Endothelial cell of umbilical vein (primary cell): ENCODE measurements at regions of chr7 and their contacts with region 1.

Region 1: DNA sequence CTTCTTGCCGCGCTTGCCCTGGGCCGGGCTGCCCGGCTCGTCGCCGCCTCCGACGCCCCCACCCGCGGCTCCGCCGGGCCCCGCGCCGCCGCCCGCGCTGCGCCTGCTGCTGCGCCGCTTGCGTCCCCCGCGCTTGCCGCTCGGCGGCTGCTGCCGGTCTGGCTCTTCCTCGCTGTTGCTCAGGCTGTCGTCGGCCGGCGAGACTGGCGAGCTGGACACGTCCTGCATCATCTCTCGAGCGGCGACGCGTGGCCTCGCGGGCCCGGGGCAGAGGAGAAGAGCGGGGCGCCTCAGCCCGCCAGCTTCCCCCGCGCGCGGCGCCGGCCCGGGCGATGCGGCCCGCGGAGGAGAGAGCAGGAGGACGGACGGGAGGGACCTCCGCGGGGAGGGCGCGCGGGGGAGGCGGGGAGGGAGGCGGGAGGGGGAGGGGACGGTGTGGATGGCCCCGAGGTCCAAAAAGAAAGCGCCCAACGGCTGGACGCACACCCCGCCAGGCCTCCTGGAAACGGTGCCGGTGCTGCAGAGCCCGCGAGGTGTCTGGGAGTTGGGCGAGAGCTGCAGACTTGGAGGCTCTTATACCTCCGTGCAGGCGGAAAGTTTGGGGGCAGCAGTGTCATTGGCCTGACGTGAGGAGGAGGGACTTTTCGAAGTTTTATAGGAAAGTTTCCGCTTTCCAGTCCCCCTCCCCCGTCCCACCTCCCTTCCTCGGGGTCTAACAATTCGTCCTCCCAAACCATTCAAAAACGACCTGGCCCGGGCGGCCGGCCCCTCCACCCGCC is at the start of gene TWIST1:
- DNase-seq: no peak
- H3K4me3 ChIP-seq: peak within 1 kb of the TSS in 2 of 3 experiments; percentile 22 to 37
- H3K27ac ChIP-seq: no peak within 1 kb of the TSS
- H3K4me1 ChIP-seq: peaks cover 13% of the 10 kb centered on the region
- H3K27me3 ChIP-seq: peaks cover 70 to 94% of the 10 kb centered on the region in 2 experiments
- CTCF ChIP-seq: no peak
- POLR2A ChIP-seq: no peak
- total RNA-seq, gene TWIST1: not detected in 2 replicates

Region 2: DNA sequence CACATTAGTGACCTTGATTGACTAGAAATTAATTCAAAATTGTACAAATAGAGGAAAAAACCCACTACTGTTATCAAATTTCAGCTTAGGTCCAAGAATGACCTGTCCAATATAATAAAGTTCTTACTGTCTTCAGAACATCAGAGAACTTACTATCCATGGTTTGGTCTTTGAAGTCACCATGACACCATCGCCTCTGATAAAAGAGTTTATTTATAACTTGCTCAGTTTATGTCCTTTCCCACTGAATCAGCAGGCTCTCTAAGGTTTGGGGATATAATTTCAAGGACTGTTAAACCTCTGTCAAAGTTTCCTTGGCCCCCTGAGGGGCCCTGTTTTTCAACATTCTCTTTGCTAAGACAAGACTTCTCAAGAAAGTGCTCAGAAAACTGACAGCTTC is 219.6 kb after region 1 on chr7:
- CTCF ChIA-PET with region 1: no interaction called
- POLR2A ChIA-PET with region 1: no interaction called
- dilution Hi-C with region 1: no loop called
- intact Hi-C with region 1: no loop called
- DNase-seq: no peak
- H3K4me3 ChIP-seq: no peak overlapping the region
- H3K27ac ChIP-seq: no peak overlapping the region
- H3K4me1 ChIP-seq: no peaks in the 10 kb centered on the region
- H3K27me3 ChIP-seq: no peaks in the 10 kb centered on the region
- CTCF ChIP-seq: no peak
- POLR2A ChIP-seq: no peak

Region 3: GRCh38 chr7:19442016-19442785 is 324.9 kb after region 1 on chr7:
- CTCF ChIA-PET with region 1: interaction called, 35 read pairs
- POLR2A ChIA-PET with region 1: no interaction called
- dilution Hi-C with region 1: no loop called
- intact Hi-C with region 1: loop called (anchors 1 kb)
- DNase-seq: peak; percentile 30
- H3K4me3 ChIP-seq: no peak overlapping the region
- H3K27ac ChIP-seq: no peak overlapping the region
- H3K4me1 ChIP-seq: no peaks in the 10 kb centered on the region
- H3K27me3 ChIP-seq: peaks cover 0 to 3% of the 10 kb centered on the region in 2 experiments
- CTCF ChIP-seq: peak; percentile 20 to 21
- POLR2A ChIP-seq: no peak

Region 4: GRCh38 chr7:19491821-19492452 is 374.7 kb after region 1 on chr7:
- CTCF ChIA-PET with region 1: interaction called, 57 read pairs
- POLR2A ChIA-PET with region 1: no interaction called
- dilution Hi-C with region 1: no loop called
- intact Hi-C with region 1: no loop called
- DNase-seq: peak; percentile 54
- H3K4me3 ChIP-seq: no peak overlapping the region
- H3K27ac ChIP-seq: no peak overlapping the region
- H3K4me1 ChIP-seq: no peaks in the 10 kb centered on the region
- H3K27me3 ChIP-seq: no peaks in the 10 kb centered on the region
- CTCF ChIP-seq: peak; percentile 30 to 37
- POLR2A ChIP-seq: no peak

Region 5: DNA sequence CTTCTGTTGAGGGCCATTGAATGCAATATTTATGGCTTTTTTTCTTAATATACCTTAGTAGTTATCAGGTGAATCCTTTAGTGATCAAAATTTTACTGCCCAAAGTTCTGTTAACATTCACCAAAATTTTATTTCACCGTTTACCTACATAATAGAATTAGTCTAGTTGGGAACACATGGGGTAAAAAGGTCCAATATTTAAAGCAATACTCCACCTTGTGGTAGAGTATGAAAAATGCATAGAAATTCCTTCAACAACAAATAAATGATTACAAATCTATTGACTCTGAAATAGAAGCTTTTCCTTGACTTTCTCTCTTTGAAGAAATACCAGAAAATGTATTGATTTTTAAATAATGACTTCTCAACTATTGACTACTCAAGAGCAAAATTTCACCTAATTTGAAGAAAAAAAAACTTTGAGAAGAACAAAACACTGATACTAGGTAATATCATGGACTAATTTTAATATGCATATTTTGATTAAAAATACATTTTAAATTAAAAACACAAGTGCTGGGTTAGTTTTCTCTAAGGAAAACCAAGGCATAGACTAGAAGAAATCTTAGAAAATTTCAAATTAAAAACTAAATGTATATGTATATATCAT is 548.2 kb after region 1 on chr7:
- CTCF ChIA-PET with region 1: interaction called, 18 read pairs
- POLR2A ChIA-PET with region 1: no interaction called
- dilution Hi-C with region 1: no loop called
- intact Hi-C with region 1: no loop called
- DNase-seq: peak; percentile 31
- H3K4me3 ChIP-seq: no peak overlapping the region
- H3K27ac ChIP-seq: no peak overlapping the region
- H3K4me1 ChIP-seq: no peaks in the 10 kb centered on the region
- H3K27me3 ChIP-seq: peaks cover 2 to 11% of the 10 kb centered on the region in 2 experiments
- CTCF ChIP-seq: peak in 1 of 2 donors; percentile 32
- POLR2A ChIP-seq: no peak